IMR-90 (cell line): ENCODE measurements at regions of chr12 and their contacts with region 1.

Region 1: GRCh38 chr12:67355578-67356379 is 86.6 kb downstream of the CAND1 start:
- DNase-seq: peak; percentile 69
- ATAC-seq: 0 out of 2 replicates have a peak, but pooled peaks have one; percentile 24
- H3K4me3 ChIP-seq: no peak overlapping the region
- H3K27ac ChIP-seq: no peak overlapping the region
- H3K4me1 ChIP-seq: peaks cover 3% of the 10 kb centered on the region
- H3K27me3 ChIP-seq: no peaks in the 10 kb centered on the region
- CTCF ChIP-seq: peak; percentile 75
- POLR2A ChIP-seq: no peak
- RAD21 ChIP-seq: peak; percentile 80

Region 2: GRCh38 chr12:67268896-67269631 is 86.7 kb before region 1 on chr12 and contains the start of gene CAND1:
- CTCF ChIA-PET with region 1: no interaction called
- POLR2A ChIA-PET with region 1: interaction called, 31 read pairs
- dilution Hi-C with region 1: no loop called
- in situ Hi-C with region 1: no loop called
- intact Hi-C with region 1: no loop called
- DNase-seq: peak; percentile 99
- ATAC-seq: peak; percentile 89
- H3K4me3 ChIP-seq: peak within 1 kb of the TSS; percentile 54
- H3K27ac ChIP-seq: peak within 1 kb of the TSS; percentile 97
- H3K4me1 ChIP-seq: no peaks in the 10 kb centered on the region
- H3K27me3 ChIP-seq: no peaks in the 10 kb centered on the region
- CTCF ChIP-seq: no peak
- POLR2A ChIP-seq: peak; percentile 92
- RAD21 ChIP-seq: 0 out of 2 replicates have a peak, but pooled peaks have one; percentile 6
- total RNA-seq, gene CAND1: 91.4 and 139 TPM in 2 replicates

Region 3: DNA sequence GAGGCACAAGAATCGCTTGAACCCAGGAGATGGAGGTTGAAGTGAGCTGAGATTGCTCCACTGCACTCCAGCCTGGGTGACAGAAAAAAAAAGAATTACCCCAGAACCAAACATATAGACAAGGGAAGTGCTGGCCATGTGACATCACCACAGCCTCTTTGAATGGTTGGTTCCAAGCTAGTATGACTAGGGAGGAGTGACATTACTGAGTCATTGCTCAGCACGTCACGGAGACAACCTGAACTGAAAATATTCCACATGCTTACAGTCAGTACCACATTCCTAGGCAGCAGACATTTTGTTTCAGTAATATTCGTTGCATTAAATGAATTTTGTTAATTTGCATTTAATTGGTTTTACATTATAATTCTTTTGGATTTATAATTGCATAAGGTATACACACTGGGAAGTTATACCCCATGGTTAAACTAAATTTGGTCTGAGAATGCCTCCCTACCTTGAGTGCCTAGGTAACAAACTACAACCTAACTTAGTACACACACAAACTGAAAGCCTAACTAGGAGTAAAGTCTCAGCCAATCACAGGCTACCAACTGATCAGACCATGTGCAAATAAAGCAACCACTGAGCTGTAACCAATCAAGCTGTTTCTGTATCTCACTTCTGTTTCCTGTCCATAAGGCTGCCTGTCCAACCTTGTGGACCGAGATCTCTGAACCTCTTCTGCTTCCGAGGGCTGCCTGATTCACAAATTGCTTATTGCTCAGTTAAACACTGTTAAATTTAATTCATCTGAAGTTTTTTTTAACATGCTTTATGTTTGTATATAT is 77.8 kb after region 1 on chr12:
- CTCF ChIA-PET with region 1: interaction called, 7 read pairs
- POLR2A ChIA-PET with region 1: no interaction called
- dilution Hi-C with region 1: no loop called
- in situ Hi-C with region 1: loop called (anchors 5 kb)
- intact Hi-C with region 1: no loop called
- DNase-seq: peak; percentile 74
- ATAC-seq: no peak
- H3K4me3 ChIP-seq: no peak overlapping the region
- H3K27ac ChIP-seq: peak overlapping the region; percentile 51; the same call in 1 of the 2 replicates
- H3K4me1 ChIP-seq: peaks cover 15% of the 10 kb centered on the region
- H3K27me3 ChIP-seq: no peaks in the 10 kb centered on the region
- CTCF ChIP-seq: no peak
- POLR2A ChIP-seq: no peak
- RAD21 ChIP-seq: no peak

Region 4: GRCh38 chr12:67648521-67649260 is 292.9 kb after region 1 on chr12 and contains the start of gene DYRK2:
- CTCF ChIA-PET with region 1: interaction called, 5 read pairs
- POLR2A ChIA-PET with region 1: no interaction called
- dilution Hi-C with region 1: no loop called
- in situ Hi-C with region 1: loop called (anchors 10 kb)
- intact Hi-C with region 1: loop called (anchors 2 kb)
- DNase-seq: peak; percentile 74
- ATAC-seq: peak; percentile 62
- H3K4me3 ChIP-seq: peak within 1 kb of the TSS; percentile 100
- H3K27ac ChIP-seq: peak within 1 kb of the TSS; percentile 92
- H3K4me1 ChIP-seq: peaks cover 6% of the 10 kb centered on the region; the same call in 1 of the 2 replicates
- H3K27me3 ChIP-seq: no peaks in the 10 kb centered on the region
- CTCF ChIP-seq: 0 out of 2 replicates have a peak, but pooled peaks have one; percentile 7
- POLR2A ChIP-seq: peak; percentile 52; the same call in 1 of the 2 replicates
- RAD21 ChIP-seq: no peak
- total RNA-seq, gene DYRK2: 20.3 and 23.1 TPM in 2 replicates

Region 5: DNA sequence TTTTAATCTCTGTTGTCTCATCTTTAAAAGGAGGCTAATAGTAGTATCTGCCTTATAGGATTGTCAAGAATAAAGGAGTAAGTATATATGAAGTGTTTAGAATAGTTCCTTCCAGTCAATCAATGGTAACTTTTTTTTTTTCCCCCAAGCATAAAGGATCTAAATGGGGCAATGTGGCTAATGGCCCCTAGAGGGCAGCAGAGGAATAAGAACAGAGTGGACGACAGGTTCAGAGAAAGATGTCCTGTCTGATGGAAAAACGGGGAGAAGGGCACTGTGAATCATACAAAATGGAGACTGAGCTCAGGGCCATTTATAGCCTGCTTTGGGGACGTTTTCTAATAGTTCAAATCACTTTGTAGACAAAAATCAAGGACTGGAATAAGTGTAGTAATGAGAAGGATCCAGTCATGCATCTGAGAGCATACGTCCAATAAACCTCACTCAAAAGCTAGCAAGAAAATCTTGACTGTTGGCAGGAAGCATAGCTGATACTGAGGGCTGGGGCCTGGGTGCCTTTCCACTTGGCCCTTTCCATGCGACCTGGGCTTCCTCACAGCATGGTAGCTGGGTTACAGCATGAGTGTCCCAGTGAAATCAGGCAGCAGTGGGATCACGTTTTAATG is 684.8 kb after region 1 on chr12:
- CTCF ChIA-PET with region 1: interaction called, 3 read pairs
- POLR2A ChIA-PET with region 1: no interaction called
- dilution Hi-C with region 1: no loop called
- in situ Hi-C with region 1: no loop called
- intact Hi-C with region 1: loop called (anchors 1 kb)
- DNase-seq: peak; percentile 73
- ATAC-seq: peak; percentile 95
- H3K4me3 ChIP-seq: no peak overlapping the region
- H3K27ac ChIP-seq: no peak overlapping the region
- H3K4me1 ChIP-seq: no peaks in the 10 kb centered on the region
- H3K27me3 ChIP-seq: no peaks in the 10 kb centered on the region; the same call in 1 of the 2 replicates
- CTCF ChIP-seq: peak; percentile 83
- POLR2A ChIP-seq: no peak
- RAD21 ChIP-seq: peak; percentile 79

Region 6: GRCh38 chr12:68317047-68317667 is 961.4 kb after region 1 on chr12:
- CTCF ChIA-PET with region 1: interaction called, 3 read pairs
- POLR2A ChIA-PET with region 1: no interaction called
- dilution Hi-C with region 1: no loop called
- in situ Hi-C with region 1: no loop called
- intact Hi-C with region 1: loop called (anchors 2 kb)
- DNase-seq: peak; percentile 68
- ATAC-seq: 0 out of 2 replicates have a peak, but pooled peaks have one; percentile 46
- H3K4me3 ChIP-seq: no peak overlapping the region
- H3K27ac ChIP-seq: no peak overlapping the region
- H3K4me1 ChIP-seq: no peaks in the 10 kb centered on the region
- H3K27me3 ChIP-seq: no peaks in the 10 kb centered on the region
- CTCF ChIP-seq: peak; percentile 74
- POLR2A ChIP-seq: no peak
- RAD21 ChIP-seq: peak; percentile 68